CD8-positive, alpha-beta memory T cell (primary cell): ENCODE measurements at regions of chr11 and their contacts with region 1.

Region 1: GRCh38 chr11:47932544-47932943 is 47.8 kb upstream of the PTPRJ start:
- DNase-seq: no peak
- H3K4me3 ChIP-seq: no peak overlapping the region
- H3K4me3 Mint-ChIP-seq: no peak overlapping the region
- H3K27ac ChIP-seq: no peak overlapping the region
- H3K27ac Mint-ChIP-seq: no peak overlapping the region
- H3K4me1 ChIP-seq: no peaks in the 10 kb centered on the region
- H3K4me1 Mint-ChIP-seq: peaks cover 10 to 19% (median 12%) of the 10 kb centered on the region in 3 donors
- H3K27me3 ChIP-seq: no peaks in the 10 kb centered on the region
- H3K27me3 Mint-ChIP-seq: peaks cover 0 to 3% of the 10 kb centered on the region in 2 donors

Region 2: DNA sequence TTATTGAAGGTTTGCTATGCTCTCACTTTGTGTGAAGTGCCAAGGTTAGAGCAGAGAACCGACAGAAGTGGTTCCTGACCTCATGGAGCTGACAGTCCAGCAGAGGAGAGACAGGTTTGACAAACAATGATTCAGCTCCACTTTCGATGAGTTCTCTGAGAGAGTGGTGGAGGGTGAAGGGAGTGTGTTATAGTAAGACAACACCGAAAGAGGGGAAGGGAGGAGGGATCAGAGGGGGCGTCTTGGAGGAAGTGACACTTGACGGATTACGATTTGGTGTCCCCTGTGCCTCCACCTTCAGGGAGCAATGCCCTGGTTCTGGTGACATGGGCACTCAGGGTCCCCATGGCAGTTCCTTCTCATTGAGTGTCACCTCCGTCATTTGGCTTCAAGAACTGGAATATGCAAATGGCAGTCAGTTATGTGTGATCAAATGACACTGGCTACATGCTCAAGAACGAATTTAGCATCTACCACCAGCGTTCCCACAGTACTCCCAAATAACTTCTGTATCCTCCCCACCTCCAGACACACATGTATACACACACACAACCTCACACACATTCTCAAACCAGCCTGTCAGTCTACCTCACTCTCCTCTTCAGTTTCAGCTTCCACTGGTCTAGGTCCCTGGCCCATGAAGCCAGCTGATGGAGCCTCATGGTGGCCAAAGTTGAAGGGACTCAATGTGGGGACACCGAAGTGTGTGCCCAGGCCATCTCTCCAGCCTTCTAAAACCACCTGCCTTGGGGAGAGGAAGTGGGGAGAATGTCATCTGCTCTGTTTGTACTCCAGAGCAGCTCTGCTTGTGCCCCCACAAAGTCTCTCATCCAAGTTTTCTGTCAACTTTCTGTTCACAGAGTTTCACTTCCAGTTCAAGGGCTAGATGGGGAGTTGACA is 53.0 kb before region 1 on chr11:
- CTCF ChIA-PET with region 1: no interaction called
- POLR2A ChIA-PET with region 1: no interaction called
- DNase-seq: no peak
- H3K4me3 ChIP-seq: no peak overlapping the region
- H3K4me3 Mint-ChIP-seq: no peak overlapping the region
- H3K27ac ChIP-seq: no peak overlapping the region
- H3K27ac Mint-ChIP-seq: no peak overlapping the region
- H3K4me1 ChIP-seq: peaks cover 2% of the 10 kb centered on the region
- H3K4me1 Mint-ChIP-seq: peaks cover 0 to 2% (median 0%) of the 10 kb centered on the region in 3 donors
- H3K27me3 ChIP-seq: no peaks in the 10 kb centered on the region
- H3K27me3 Mint-ChIP-seq: peaks cover 11 to 24% of the 10 kb centered on the region in 2 donors

Region 3: DNA sequence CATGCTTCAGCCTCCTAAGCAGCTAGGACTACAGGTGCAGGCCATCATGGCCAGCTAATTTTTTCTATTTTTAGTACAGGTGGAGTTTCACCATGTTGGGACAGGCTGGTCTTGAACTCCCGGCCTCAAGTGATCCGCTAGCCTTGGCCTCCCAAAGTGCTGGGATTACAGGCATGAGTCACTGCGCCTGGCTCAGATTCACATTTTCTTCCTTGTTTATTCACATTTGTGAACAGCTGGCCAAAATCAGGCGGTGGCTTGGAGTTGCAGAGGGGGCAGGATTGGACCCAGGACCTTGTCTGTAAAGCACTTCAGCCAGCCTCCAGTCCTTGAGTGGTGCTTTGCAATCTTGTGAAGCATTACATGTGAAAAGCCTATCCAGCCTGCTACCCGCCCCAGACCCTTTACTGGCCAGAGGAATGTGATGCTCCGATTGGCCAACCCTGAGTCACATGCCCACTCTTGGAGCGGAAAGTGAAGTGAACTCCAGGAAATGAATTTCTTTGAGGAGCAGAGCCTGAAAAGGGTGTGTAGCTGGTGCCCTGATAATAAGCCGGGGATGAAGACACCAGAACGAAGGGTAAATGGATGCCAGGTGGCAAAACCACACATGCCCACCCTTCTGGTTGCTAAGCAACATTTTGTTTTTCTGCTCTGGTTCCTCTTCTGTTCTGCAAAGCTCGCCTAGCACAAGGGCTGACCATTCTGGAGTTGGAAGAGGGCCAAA is 14.7 kb before region 1 on chr11:
- CTCF ChIA-PET with region 1: interaction called, 17 read pairs
- POLR2A ChIA-PET with region 1: interaction called, 10 read pairs
- DNase-seq: peak in 3 of 5 donors; percentile 26 to 56 (median 54)
- H3K4me3 ChIP-seq: no peak overlapping the region
- H3K4me3 Mint-ChIP-seq: peak overlapping the region in 4 of 7 donors; percentile 42 to 74 (median 54)
- H3K27ac ChIP-seq: peak overlapping the region; percentile 51
- H3K27ac Mint-ChIP-seq: peak overlapping the region; percentile 39 to 89 (median 80)
- H3K4me1 ChIP-seq: peaks cover 55% of the 10 kb centered on the region
- H3K4me1 Mint-ChIP-seq: peaks cover 61 to 66% (median 65%) of the 10 kb centered on the region in 3 donors
- H3K27me3 ChIP-seq: no peaks in the 10 kb centered on the region
- H3K27me3 Mint-ChIP-seq: no peaks in the 10 kb centered on the region

Region 4: GRCh38 chr11:48055292-48056132 is 123.0 kb after region 1 on chr11:
- CTCF ChIA-PET with region 1: interaction called, 22 read pairs
- POLR2A ChIA-PET with region 1: no interaction called
- DNase-seq: peak; percentile 16 to 77 (median 67)
- H3K4me3 ChIP-seq: peak overlapping the region; percentile 42
- H3K4me3 Mint-ChIP-seq: peak overlapping the region; percentile 29 to 89 (median 72)
- H3K27ac ChIP-seq: peak overlapping the region; percentile 54
- H3K27ac Mint-ChIP-seq: peak overlapping the region; percentile 61 to 94 (median 80)
- H3K4me1 ChIP-seq: peaks cover 87% of the 10 kb centered on the region
- H3K4me1 Mint-ChIP-seq: peaks cover 71 to 89% (median 89%) of the 10 kb centered on the region in 3 donors
- H3K27me3 ChIP-seq: no peaks in the 10 kb centered on the region
- H3K27me3 Mint-ChIP-seq: no peaks in the 10 kb centered on the region